Right ventricle myocardium superior (tissue), 1 donor: ENCODE measurements at regions of chr17 and their contacts with region 1.

Region 1: DNA sequence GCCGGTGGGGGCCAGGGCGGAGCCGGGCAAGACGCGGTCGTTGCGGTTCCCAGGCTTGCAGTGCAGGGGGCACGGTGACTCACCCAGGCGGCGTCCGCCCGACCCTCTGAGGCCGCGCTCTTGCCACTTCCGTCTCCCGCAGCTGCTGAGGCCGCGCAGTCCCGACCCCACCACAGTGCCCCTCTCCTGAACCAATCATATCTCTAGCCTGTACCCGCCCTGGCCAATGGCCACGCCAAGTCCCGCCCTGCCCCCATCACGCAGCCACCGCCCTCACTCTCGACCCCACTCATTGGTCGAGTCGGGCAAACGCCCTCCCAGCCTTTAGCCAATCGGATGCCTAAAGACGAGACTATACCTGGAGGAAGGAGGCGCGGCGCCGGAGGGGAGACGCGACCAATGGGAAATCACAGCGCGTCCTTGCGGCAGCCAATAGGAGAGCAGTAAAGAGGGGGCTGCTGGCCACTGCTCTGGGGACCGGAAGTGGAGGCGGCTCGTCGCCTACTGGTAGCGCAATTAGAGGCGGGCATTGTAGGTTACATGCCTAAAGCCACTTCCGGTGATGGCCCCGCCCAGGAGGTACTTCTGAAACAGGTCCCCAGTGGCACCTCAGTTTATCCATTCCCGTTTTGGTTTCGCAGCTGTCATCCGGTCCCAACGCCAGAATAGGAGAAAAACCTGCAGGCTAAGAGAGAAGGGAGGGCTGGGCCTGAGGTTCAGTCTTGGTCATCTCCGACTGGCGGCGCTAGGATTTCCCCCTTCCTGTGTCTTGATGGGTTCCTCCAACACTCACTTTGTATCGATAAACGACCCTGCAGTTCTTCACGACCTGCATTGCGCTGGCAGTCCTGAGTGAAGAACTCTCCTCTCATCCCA is 3.5 kb upstream of the MTMR4 start:
- DNase-seq: peak; percentile 100
- ATAC-seq: peak; percentile 92

Region 2: DNA sequence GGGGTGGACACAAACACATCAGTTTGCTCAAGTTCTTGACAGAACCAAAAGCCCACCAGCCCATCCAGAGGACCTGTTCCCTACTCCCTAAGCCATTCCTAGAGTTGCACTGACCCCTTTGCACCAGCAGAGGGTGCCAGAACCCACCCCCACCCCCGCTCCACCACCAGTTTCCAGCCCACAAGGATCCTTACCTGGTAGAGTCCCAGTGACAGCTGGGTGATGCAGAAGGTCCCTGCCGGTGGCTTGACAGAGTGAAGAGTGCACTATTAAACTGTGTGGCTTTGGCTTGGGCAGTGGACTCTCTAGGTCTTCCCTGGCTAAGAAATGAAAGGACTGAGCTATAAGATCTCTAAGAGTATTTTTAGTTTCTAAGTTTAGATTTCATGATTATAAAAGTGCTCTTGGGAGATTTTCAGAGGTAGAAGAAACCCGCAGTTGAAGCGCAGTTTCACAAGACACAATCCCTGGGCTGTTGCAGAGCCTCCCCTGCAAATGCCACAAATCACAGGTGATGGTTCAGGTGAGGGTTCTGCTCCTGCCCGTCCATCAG is 69.8 kb after region 1 on chr17:
- intact Hi-C with region 1: loop called (anchors 5 kb)
- DNase-seq: peak; percentile 48
- ATAC-seq: peak; percentile 82

Region 3: GRCh38 chr17:58631523-58632323 is 113.8 kb after region 1 on chr17:
- intact Hi-C with region 1: loop called (anchors 1 kb)
- DNase-seq: peak; percentile 95
- ATAC-seq: peak; percentile 99

Region 4: GRCh38 chr17:58932964-58933363 is 415.0 kb after region 1 on chr17:
- intact Hi-C with region 1: no loop called
- DNase-seq: no peak
- ATAC-seq: no peak